Common myeloid progenitor, CD34-positive (primary cell): ENCODE measurements at regions of chr9 and their contacts with region 1.

Region 1: GRCh38 chr9:124415102-124415851 is at the start of gene PSMB7:
- DNase-seq: peak; percentile 98 to 99 (median 98)
- H3K4me3 ChIP-seq: peak within 1 kb of the TSS; percentile 83 to 98 (median 96)
- H3K27ac ChIP-seq: peak within 1 kb of the TSS; percentile 65 to 90
- H3K4me1 ChIP-seq: peaks cover 6 to 13% (median 10%) of the 10 kb centered on the region in 4 experiments
- H3K27me3 ChIP-seq: no peaks in the 10 kb centered on the region

Region 2: DNA sequence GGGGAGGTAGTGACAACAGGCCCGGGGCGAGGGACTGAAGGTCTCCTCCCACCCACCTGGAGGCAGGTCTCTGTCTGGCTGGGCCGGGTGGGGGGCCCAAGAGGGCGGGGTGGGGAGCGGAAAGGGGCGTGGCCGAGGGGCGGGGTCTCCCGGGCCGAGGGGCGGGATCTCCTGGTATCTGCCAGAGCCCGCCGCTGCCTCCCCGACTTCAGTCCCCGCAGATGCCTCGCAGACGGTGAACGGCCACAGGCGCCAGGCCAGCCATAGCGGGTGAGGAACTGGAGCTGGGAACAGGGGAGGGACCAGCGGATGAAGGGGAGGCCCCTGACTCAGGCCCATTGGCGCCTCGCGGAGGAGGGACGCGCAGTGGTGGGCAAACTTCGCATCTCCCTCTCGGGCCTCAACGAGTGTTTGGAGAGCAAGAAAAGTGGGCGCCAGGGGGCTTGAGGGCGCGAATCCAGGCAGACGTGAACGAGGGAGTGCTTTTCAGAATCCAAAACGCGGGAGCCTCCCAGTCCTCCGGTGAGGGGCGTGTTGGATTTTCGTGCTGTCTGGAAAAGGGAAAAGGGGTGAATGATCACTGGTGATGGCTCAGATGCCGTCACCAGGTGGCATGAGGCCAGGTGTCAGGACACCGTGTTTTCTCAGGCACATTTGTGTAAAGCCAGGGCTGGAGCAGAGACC is 35.1 kb after region 1 on chr9 and contains the start of gene ADGRD2:
- CTCF ChIA-PET with region 1: interaction called, 51 read pairs
- POLR2A ChIA-PET with region 1: no interaction called
- DNase-seq: peak; percentile 38 to 76 (median 64)
- H3K4me3 ChIP-seq: peak within 1 kb of the TSS in 5 of 7 experiments; percentile 8 to 56 (median 37)
- H3K27ac ChIP-seq: no peak within 1 kb of the TSS
- H3K4me1 ChIP-seq: peaks cover 0 to 20% (median 10%) of the 10 kb centered on the region in 4 experiments
- H3K27me3 ChIP-seq: peaks cover 0 to 49% (median 19%) of the 10 kb centered on the region in 5 experiments

Region 3: DNA sequence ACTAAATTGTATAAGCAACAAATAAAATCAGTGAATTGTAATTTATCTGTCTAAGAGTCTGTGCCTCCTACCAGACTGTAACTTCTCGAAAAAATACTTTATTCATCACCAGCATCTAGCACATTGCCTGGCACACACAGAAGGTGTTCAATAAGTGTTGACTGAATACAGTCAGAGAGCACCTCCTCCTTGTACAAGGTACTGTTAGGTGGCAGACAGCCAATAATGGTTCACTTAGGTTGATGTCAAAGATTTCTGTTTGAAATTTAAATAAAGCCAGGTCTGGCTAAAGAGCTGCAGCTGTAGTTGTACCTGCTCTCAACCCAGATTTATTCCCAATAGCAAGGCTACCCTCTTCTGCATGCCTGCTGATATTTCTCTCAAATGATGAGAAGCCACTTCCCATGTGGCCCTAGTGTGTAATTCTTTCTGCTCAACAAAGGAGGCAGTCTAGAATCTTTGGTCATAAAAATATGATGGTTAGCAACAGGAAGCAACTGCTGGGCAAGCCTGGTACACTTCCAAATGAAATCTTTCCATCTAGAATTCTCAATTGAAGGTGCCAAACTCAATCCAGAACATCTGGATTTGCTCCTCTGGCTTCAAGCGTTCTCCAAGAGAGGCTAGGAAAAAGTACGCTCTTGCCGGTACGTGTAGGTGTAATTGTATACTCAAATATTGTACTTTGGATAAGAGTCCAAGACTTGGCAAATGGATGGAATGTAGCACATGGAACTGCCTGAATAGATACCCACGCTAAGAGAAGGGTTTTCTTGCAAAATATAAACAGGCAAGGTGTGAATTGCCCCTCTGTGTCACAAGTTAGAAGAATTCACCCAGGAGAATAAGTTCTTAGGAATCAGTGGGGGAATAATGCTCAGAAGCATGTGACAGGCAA is 260.2 kb after region 1 on chr9:
- CTCF ChIA-PET with region 1: no interaction called
- POLR2A ChIA-PET with region 1: no interaction called
- DNase-seq: peak in 2 of 3 donors; percentile 33 to 48
- H3K4me3 ChIP-seq: no peak overlapping the region
- H3K27ac ChIP-seq: no peak overlapping the region
- H3K4me1 ChIP-seq: peaks cover 0 to 2% (median under 1%) of the 10 kb centered on the region in 4 experiments
- H3K27me3 ChIP-seq: no peaks in the 10 kb centered on the region